ENCODE measurements at regions of chr7 and their contacts with region 1.

Region 1: DNA sequence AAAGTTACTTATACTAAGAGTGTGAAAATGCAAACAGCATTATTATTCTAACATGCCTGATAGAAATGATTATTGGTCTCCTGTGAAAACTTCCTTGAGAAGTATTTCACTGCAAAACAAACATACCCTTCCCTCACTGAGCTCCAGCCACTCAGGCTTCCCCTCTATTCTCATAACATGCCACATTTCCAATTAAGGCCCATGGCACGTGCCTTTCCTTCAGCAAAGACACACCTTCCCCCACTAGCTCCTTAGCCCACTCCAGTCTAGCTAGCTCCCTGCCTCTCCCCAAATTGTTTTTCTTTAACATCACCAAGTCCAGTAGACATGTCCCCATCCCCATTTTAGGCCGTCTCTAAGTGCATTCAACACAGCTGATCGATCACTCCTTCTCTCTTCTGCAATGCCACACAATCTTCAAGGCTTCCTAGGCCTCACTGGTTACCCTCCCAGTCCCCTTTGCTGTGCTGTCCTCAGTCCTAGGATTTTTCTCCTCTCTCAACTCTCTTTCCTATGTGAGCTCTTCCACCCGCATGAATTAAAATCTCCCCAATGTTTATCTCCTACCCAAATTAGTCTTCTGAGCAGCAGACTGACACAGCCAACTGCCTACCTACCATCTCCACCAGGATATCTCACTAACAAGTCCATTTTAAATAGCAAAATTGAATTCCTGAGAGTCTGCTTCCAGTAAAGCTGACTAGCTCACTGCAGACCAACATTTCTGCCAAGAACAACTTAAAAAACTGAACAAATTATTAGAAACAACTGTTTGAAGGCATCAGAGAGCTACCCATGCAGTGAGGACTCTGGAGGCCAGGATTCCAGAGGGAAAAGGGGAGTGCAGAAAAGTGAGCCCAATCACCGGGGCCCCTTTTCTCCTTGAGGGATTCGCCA is 11.9 kb downstream of the CYTH3 start:
- DNase-seq: no peak
- ATAC-seq: peak; percentile 40

Region 2: GRCh38 chr7:6175645-6176044 is 84.9 kb before region 1 on chr7:
- intact Hi-C with region 1: loop called (anchors 10 kb)
- DNase-seq: no peak
- ATAC-seq: no peak

Measured in left ventricle myocardium superior (tissue), 1 donor.